K562 (cell line): ENCODE measurements at regions of chr21 and their contacts with region 1.

Region 1: GRCh38 chr21:37463083-37463801 is 96.7 kb downstream of the DYRK1A start:
- DNase-seq: peak; percentile 41 to 51 (median 47)
- ATAC-seq: peak; percentile 74
- H3K4me3 ChIP-seq: no peak overlapping the region
- H3K27ac ChIP-seq: no peak overlapping the region
- H3K4me1 ChIP-seq: peaks cover 0 to 29% of the 10 kb centered on the region in 2 experiments; a peak in 3 of 5 replicates
- H3K27me3 ChIP-seq: no peaks in the 10 kb centered on the region
- CTCF ChIP-seq: peak; percentile 59 to 84 (median 70)
- EP300 ChIP-seq: no peak
- POLR2A ChIP-seq: no peak
- RAD21 ChIP-seq: peak in 1 of 2 experiments; percentile 68; a peak in 3 of 4 replicates

Region 2: GRCh38 chr21:37220981-37221664 is 242.1 kb before region 1 on chr21:
- CTCF ChIA-PET with region 1: no interaction called
- POLR2A ChIA-PET with region 1: no interaction called
- in situ Hi-C with region 1: no loop called
- intact Hi-C with region 1: loop called (anchors 5 kb)
- DNase-seq: peak; percentile 90 to 94 (median 91)
- ATAC-seq: peak; percentile 97
- H3K4me3 ChIP-seq: peak overlapping the region; percentile 46
- H3K27ac ChIP-seq: peak overlapping the region; percentile 70
- H3K4me1 ChIP-seq: peaks cover 0 to 12% of the 10 kb centered on the region in 2 experiments; a peak in 1 of 5 replicates
- H3K27me3 ChIP-seq: no peaks in the 10 kb centered on the region
- CTCF ChIP-seq: peak; percentile 49 to 60 (median 55); a peak in 5 of 6 replicates
- EP300 ChIP-seq: no peak
- POLR2A ChIP-seq: peak; percentile 79
- RAD21 ChIP-seq: peak; percentile 52 to 78

Region 3: DNA sequence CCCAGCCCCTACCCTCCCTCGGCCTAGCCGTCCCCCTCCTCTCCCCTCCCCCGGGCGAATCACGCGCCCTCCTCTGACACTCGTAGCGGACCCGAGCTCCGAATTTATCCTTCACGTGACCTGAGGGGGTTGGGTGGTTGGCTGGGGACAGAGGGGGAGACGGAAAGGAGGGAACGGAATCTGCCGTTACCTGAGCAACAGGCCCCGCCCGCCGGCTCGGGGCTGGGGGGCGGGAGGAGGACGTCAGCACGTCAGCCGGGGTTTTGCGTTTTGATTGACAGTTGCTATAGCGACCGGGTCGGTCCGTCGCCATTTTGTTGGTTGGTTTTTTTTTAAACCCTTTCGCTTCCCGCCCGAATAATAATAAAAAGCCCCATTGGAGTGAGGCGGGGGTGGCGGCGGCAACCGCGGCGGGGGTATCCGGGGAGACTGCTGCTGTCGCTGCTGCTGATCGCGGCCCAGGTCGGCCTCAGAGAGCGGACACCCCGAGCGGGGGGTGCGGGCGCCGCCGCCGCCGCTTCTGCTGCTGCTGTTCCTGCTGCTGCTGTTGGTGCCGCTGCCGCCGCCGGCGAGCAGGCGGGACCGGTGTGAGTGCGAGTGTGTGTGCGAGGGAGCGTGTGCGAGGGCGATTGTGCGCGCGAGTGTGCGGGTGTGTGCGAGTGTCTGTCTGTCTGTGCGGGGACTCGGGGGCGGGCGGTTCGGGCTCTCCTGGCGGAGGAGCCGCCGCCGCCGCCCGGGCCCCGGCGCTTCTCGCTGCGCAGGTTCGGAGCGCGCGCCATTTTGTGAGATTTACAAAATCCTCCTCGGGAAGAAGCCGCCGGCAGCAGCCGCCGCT is 96.5 kb before region 1 on chr21 and contains the start of gene DYRK1A:
- CTCF ChIA-PET with region 1: no interaction called
- POLR2A ChIA-PET with region 1: interaction called, 3 read pairs
- in situ Hi-C with region 1: no loop called
- intact Hi-C with region 1: loop called (anchors 5 kb)
- DNase-seq: peak; percentile 96 to 100 (median 98)
- ATAC-seq: peak; percentile 79
- H3K4me3 ChIP-seq: peak within 1 kb of the TSS; percentile 88
- H3K27ac ChIP-seq: peak within 1 kb of the TSS; percentile 98
- H3K4me1 ChIP-seq: peaks cover 8 to 20% of the 10 kb centered on the region in 2 experiments
- H3K27me3 ChIP-seq: no peaks in the 10 kb centered on the region; a peak in 1 of 5 replicates
- CTCF ChIP-seq: no peak
- EP300 ChIP-seq: peak; percentile 65
- POLR2A ChIP-seq: peak; percentile 87
- RAD21 ChIP-seq: peak; percentile 9 to 11; a peak in 1 of 4 replicates
- polyA plus RNA-seq, gene DYRK1A: 3.7 to 13.2 TPM

Region 4: DNA sequence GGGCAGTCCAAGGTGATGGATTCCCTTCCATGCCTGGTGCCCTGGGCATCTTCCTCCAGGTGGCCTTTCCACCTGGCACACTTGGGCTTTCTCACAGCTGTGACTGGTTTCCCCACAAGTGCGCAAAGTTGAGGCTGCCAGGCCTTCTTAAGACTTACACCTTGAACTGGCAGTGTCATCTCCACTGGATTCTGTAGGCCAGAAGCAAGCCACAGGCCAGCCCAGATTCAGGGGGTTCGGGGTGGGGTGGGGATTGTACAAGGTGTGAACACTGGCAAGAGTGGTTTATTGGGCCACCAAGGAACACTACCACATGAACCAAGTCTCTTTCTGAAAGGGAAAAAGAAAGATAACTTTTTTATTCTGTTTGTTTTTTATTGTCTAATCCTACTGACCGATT is 69.5 kb before region 1 on chr21:
- CTCF ChIA-PET with region 1: no interaction called
- POLR2A ChIA-PET with region 1: no interaction called
- in situ Hi-C with region 1: no loop called
- intact Hi-C with region 1: no loop called
- DNase-seq: no peak
- ATAC-seq: no peak
- H3K4me3 ChIP-seq: no peak overlapping the region
- H3K27ac ChIP-seq: no peak overlapping the region
- H3K4me1 ChIP-seq: peaks cover 3 to 10% of the 10 kb centered on the region in 2 experiments; a peak in 3 of 5 replicates
- H3K27me3 ChIP-seq: no peaks in the 10 kb centered on the region
- CTCF ChIP-seq: no peak
- EP300 ChIP-seq: no peak
- POLR2A ChIP-seq: no peak
- RAD21 ChIP-seq: no peak

Region 5: DNA sequence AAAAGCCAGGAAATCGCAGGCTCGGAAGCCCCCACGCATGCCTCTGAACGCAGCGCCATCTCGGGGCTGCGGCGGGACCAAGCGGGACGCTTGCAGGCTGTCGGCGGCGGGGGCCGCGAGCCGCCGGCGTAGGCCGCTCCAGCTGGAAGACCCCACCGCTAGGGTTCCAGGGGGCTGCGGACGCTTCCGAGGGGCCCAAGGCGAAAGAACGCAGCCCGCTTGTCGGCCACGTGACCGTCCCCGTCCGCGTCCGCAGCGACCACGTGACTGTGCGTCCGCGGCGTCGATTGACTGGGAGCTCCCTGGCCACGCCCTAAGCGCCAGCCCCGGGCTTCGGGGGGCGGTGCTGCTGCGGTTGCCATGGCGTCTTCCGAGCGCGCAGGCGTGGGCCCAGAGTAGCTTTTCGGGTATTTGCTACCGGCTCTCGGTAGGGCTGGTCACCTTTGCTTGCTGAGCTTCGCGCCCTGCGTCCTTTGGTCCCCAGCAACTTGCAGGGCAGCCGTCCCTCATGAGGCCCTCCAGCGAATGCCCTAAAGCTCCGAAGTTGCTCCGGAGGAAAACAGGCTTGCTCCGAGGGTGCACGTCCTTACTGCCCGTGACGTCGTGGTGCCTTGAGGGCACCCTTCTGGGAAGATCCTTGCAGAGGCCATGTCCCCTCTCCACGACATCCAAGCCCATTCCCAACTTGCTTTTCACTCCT is 100.5 kb after region 1 on chr21:
- CTCF ChIA-PET with region 1: no interaction called
- POLR2A ChIA-PET with region 1: interaction called, 3 read pairs
- in situ Hi-C with region 1: no loop called
- intact Hi-C with region 1: loop called (anchors 5 kb)
- DNase-seq: peak; percentile 98 to 99 (median 98)
- ATAC-seq: peak; percentile 93
- H3K4me3 ChIP-seq: peak overlapping the region; percentile 61
- H3K27ac ChIP-seq: peak overlapping the region; percentile 90
- H3K4me1 ChIP-seq: peaks cover 30 to 55% of the 10 kb centered on the region in 2 experiments
- H3K27me3 ChIP-seq: no peaks in the 10 kb centered on the region
- CTCF ChIP-seq: peak; percentile 47 to 69 (median 63)
- EP300 ChIP-seq: peak; percentile 59
- POLR2A ChIP-seq: peak; percentile 87
- RAD21 ChIP-seq: peak; percentile 41 to 55

Region 6: GRCh38 chr21:37642493-37642892 is 179.3 kb after region 1 on chr21:
- CTCF ChIA-PET with region 1: no interaction called
- POLR2A ChIA-PET with region 1: no interaction called
- in situ Hi-C with region 1: no loop called
- intact Hi-C with region 1: loop called (anchors 5 kb)
- DNase-seq: peak; percentile 60 to 74 (median 67)
- ATAC-seq: peak; percentile 95
- H3K4me3 ChIP-seq: no peak overlapping the region
- H3K27ac ChIP-seq: no peak overlapping the region
- H3K4me1 ChIP-seq: peaks cover 4 to 5% of the 10 kb centered on the region in 2 experiments; a peak in 2 of 5 replicates
- H3K27me3 ChIP-seq: peaks cover 18 to 23% of the 10 kb centered on the region in 2 experiments
- CTCF ChIP-seq: peak; percentile 61 to 79 (median 73)
- EP300 ChIP-seq: no peak
- POLR2A ChIP-seq: no peak
- RAD21 ChIP-seq: peak; percentile 80 to 90

Region 7: DNA sequence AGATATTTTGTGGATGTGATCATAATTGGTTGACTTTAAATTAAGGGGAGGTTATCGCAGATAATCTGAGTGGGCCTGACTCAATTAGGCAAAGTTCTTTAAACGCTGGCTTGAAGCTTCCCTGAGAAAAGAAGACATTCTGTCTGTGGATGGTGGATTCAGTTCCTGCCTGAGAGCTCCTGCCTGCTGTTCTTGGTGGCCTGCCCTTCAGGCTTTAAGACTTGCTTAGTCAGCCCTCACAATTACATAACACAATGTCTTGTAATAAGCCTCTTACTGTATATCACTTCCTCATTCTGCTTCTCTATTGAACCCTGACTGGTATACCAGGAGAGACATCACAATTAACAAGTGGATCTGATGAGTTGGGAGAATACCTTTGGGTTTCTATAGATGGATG is 402.8 kb after region 1 on chr21:
- CTCF ChIA-PET with region 1: no interaction called
- POLR2A ChIA-PET with region 1: no interaction called
- in situ Hi-C with region 1: no loop called
- intact Hi-C with region 1: no loop called
- DNase-seq: no peak
- ATAC-seq: no peak
- H3K4me3 ChIP-seq: no peak overlapping the region
- H3K27ac ChIP-seq: no peak overlapping the region
- H3K4me1 ChIP-seq: no peaks in the 10 kb centered on the region
- H3K27me3 ChIP-seq: peaks cover 9 to 28% of the 10 kb centered on the region in 2 experiments; a peak in 4 of 5 replicates
- CTCF ChIP-seq: no peak
- EP300 ChIP-seq: no peak
- POLR2A ChIP-seq: no peak
- RAD21 ChIP-seq: no peak